ENCODE measurements at regions of chr2 and their contacts with region 1.

Region 1: DNA sequence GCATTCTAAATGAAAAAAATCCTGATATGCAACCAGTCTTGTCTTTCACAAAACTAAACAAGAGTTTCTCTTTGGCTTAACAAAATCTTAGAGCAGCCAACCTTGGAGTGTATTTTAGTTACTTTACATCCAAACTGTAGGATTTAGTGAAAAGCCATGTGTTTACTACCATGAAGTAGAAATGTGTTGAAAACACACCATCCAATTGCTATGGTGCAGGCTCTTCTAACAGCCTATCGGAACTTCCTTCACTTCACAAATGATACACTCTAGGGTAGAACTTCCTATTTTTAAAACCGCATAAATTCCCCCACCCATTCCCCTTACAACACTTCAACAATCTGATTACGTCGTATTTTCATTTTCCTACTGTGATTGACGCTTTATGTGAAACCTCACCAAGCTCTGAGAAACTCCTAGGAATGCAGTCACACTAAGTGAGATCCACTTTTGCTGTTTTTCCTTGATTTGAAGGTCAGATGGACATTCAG is 74.4 kb upstream of the MAP4K4 start:
- DNase-seq: no peak
- ATAC-seq: peak; percentile 82
- H3K4me3 Mint-ChIP-seq: peak overlapping the region; percentile 69
- H3K27ac Mint-ChIP-seq: peak overlapping the region; percentile 95
- H3K4me1 Mint-ChIP-seq: peaks cover 78% of the 10 kb centered on the region
- H3K27me3 Mint-ChIP-seq: no peaks in the 10 kb centered on the region
- CTCF ChIP-seq: no peak

Region 2: DNA sequence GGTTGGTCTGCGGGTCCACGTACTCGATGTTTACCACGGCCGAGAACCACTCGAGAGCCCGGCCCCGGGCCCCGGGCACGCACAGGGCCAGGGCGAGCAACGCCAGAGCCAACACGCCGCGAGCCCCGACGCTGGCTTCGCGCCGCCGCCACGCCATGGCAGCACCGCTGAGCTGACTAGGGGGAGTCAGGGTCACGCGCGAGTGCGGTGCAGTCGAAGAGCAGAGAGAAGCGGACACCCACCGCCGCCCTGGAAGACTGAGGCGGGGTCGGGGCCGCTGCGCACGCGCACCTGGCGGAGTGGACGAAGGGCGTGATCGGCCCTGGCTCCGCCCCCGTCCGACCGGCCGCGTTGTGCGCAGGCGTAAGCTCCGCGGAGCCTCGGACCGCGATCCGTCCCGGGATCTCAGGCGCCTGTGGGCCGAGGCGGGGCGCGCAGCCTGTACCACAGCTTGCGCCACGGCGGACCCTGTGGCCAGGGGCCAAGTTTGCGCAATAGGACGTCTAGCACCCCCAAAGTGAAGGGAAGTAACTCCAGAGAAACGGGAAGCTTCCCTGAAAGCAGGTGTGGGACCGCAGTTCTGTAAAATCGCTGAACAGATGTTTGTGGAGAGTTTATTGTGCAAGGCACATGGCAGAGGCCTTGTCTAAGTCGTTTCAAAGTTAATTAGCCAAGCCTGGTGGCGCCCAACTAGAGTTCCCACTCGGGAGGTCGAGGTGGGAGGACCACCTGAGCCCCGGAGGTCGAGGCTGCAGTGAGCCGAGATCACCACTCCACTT is 314.5 kb before region 1 on chr2 and contains the start of gene RNF149:
- CTCF ChIA-PET with region 1: no interaction called
- POLR2A ChIA-PET with region 1: interaction called, 3 read pairs
- intact Hi-C with region 1: loop called (anchors 1 kb)
- DNase-seq: peak; percentile 97
- ATAC-seq: peak; percentile 79
- H3K4me3 Mint-ChIP-seq: peak within 1 kb of the TSS; percentile 85
- H3K27ac Mint-ChIP-seq: peak within 1 kb of the TSS; percentile 90
- H3K4me1 Mint-ChIP-seq: peaks cover 54% of the 10 kb centered on the region
- H3K27me3 Mint-ChIP-seq: no peaks in the 10 kb centered on the region
- CTCF ChIP-seq: no peak
- total RNA-seq, gene RNF149: 39.6 and 48.3 TPM in 2 replicates

Region 3: GRCh38 chr2:101387151-101387807 is 235.8 kb before region 1 on chr2 and contains the start of gene CREG2:
- CTCF ChIA-PET with region 1: no interaction called
- POLR2A ChIA-PET with region 1: no interaction called
- intact Hi-C with region 1: no loop called
- DNase-seq: peak; percentile 44
- ATAC-seq: peak; percentile 83
- H3K4me3 Mint-ChIP-seq: peak within 1 kb of the TSS; percentile 66
- H3K27ac Mint-ChIP-seq: no peak within 1 kb of the TSS
- H3K4me1 Mint-ChIP-seq: peaks cover 15% of the 10 kb centered on the region
- H3K27me3 Mint-ChIP-seq: peaks cover 45% of the 10 kb centered on the region
- CTCF ChIP-seq: no peak
- total RNA-seq, gene CREG2: not detected in 2 replicates

Region 4: DNA sequence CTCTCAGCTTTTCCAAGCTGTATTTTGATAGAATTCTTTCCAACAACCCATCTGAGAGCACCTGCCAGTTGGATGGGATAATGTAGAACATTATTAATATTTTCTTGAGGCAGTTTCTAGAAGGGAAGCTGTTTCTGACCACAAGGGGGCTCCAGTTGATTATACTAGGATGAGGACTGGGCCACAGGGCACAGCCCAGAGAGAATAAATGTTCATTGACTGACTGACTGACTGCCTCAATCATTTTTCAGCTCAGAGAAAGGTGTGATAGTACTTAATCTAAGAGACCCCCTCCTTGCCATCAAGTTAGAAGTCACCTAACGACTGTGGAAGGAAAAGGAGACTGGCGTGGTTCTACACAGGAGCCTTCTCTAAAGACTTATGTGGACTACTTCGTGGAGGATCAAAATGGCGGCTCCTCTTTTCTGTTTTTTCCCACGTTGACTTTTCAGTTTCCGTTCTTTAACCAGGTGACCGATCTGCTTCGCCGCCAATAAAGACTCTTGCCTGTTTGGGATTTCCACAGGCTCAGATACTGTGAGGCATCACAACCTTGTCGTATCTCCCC is 203.9 kb before region 1 on chr2:
- CTCF ChIA-PET with region 1: interaction called, 4 read pairs
- POLR2A ChIA-PET with region 1: interaction called, 5 read pairs
- intact Hi-C with region 1: loop called (anchors 1 kb)
- DNase-seq: no peak
- ATAC-seq: peak; percentile 88
- H3K4me3 Mint-ChIP-seq: no peak overlapping the region
- H3K27ac Mint-ChIP-seq: no peak overlapping the region
- H3K4me1 Mint-ChIP-seq: peaks cover 6% of the 10 kb centered on the region
- H3K27me3 Mint-ChIP-seq: no peaks in the 10 kb centered on the region
- CTCF ChIP-seq: no peak

Region 5: GRCh38 chr2:101644842-101645383 is 21.8 kb after region 1 on chr2:
- CTCF ChIA-PET with region 1: no interaction called
- POLR2A ChIA-PET with region 1: interaction called, 11 read pairs
- intact Hi-C with region 1: no loop called
- DNase-seq: no peak
- ATAC-seq: no peak
- H3K4me3 Mint-ChIP-seq: no peak overlapping the region
- H3K27ac Mint-ChIP-seq: no peak overlapping the region
- H3K4me1 Mint-ChIP-seq: no peaks in the 10 kb centered on the region
- H3K27me3 Mint-ChIP-seq: no peaks in the 10 kb centered on the region
- CTCF ChIP-seq: no peak

Region 6: GRCh38 chr2:101677658-101678057 is 54.6 kb after region 1 on chr2:
- CTCF ChIA-PET with region 1: no interaction called
- POLR2A ChIA-PET with region 1: interaction called, 13 read pairs
- intact Hi-C with region 1: loop called (anchors 1 kb)
- DNase-seq: no peak
- ATAC-seq: peak; percentile 70
- H3K4me3 Mint-ChIP-seq: no peak overlapping the region
- H3K27ac Mint-ChIP-seq: peak overlapping the region; percentile 24
- H3K4me1 Mint-ChIP-seq: peaks cover 32% of the 10 kb centered on the region
- H3K27me3 Mint-ChIP-seq: no peaks in the 10 kb centered on the region
- CTCF ChIP-seq: no peak

Region 7: DNA sequence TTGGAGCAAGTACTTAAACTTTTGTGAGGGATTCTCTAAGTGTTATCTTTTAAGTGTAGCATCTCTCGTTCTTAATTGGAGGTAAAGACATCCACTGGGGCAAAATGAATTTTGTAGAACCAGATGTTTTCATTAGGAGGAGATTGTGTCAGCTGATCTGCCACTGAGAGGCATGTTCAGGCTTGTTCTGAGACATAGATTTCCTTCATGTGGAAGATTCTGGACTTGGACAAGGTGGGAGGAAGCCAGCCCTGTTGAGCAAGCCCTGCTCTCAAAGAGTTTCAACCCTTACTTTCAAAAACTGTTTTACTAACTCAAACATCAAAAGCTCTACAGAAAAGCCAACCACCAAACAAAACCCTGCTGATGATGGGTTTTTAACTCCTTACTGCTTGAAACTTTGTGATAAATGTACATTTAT is 81.0 kb after region 1 on chr2:
- CTCF ChIA-PET with region 1: interaction called, 4 read pairs
- POLR2A ChIA-PET with region 1: interaction called, 106 read pairs
- intact Hi-C with region 1: no loop called
- DNase-seq: no peak
- ATAC-seq: peak; percentile 11
- H3K4me3 Mint-ChIP-seq: peak overlapping the region; percentile 75
- H3K27ac Mint-ChIP-seq: peak overlapping the region; percentile 88
- H3K4me1 Mint-ChIP-seq: no peaks in the 10 kb centered on the region
- H3K27me3 Mint-ChIP-seq: no peaks in the 10 kb centered on the region
- CTCF ChIP-seq: no peak

Region 8: DNA sequence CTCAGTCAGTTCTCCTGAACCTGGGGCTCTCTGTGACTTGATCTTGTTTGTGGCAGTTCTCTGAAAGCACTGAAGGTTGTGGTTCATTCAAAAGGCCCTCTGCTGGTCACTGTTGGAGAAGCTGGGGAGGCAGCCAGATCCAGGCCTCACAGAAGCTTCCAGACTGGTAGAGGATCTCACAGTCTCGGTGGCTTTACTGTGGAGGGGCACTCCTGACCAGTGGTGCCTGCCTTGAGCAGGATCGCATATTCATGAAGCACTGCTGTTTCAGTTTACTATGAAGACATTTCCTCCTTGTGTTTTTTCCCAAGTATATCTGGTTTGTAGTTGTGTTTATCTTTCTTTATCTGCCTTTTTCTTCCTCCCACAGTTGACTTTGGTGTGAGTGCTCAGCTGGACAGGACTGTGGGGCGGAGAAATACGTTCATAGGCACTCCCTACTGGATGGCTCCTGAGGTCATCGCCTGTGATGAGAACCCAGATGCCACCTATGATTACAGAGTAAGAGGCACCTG is 208.3 kb after region 1 on chr2:
- CTCF ChIA-PET with region 1: interaction called, 9 read pairs
- POLR2A ChIA-PET with region 1: interaction called, 9 read pairs
- intact Hi-C with region 1: loop called (anchors 2 kb)
- DNase-seq: peak; percentile 37
- ATAC-seq: peak; percentile 82
- H3K4me3 Mint-ChIP-seq: no peak overlapping the region
- H3K27ac Mint-ChIP-seq: peak overlapping the region; percentile 56
- H3K4me1 Mint-ChIP-seq: peaks cover 49% of the 10 kb centered on the region
- H3K27me3 Mint-ChIP-seq: no peaks in the 10 kb centered on the region
- CTCF ChIP-seq: no peak

Region 9: GRCh38 chr2:102129951-102130646 is 507.0 kb after region 1 on chr2:
- CTCF ChIA-PET with region 1: no interaction called
- POLR2A ChIA-PET with region 1: no interaction called
- intact Hi-C with region 1: no loop called
- DNase-seq: no peak
- ATAC-seq: no peak
- H3K4me3 Mint-ChIP-seq: no peak overlapping the region
- H3K27ac Mint-ChIP-seq: no peak overlapping the region
- H3K4me1 Mint-ChIP-seq: no peaks in the 10 kb centered on the region
- H3K27me3 Mint-ChIP-seq: peaks cover 13% of the 10 kb centered on the region
- CTCF ChIP-seq: no peak

Region 10: DNA sequence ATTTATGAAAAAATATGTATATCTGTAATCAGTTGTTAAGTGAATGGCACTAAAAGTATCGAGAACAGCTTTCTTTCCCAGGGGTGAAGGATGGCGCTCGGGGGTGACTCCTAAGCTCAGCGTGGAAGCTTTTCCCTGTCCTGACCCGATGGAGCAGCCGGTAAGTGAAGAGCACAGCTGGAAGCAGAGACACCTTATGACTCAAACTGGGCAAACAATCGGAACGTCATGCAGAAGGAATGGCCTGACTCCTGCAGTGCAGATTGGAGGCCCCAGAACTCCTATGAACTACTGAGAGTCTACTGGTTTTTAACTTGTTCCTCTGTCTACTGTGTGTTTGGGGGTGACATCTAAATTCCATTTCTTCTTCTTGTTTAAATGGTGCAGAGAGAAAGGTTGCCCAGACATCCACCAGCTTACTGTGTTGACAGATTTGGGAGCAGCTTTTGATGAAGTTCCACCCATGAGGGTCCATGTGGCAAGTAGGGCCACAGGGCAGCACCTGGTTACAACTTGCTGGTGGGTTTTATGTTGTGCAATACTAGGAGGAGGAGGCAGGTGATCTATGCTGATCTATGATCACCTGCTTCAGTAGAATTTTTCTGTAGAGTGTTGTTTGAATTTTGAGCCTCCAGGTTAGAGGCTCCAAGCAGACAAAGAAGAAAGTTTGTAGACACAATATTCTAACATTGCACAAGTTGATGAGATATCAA is 1085.9 kb after region 1 on chr2:
- CTCF ChIA-PET with region 1: no interaction called
- POLR2A ChIA-PET with region 1: no interaction called
- intact Hi-C with region 1: no loop called
- DNase-seq: no peak
- ATAC-seq: no peak
- H3K4me3 Mint-ChIP-seq: no peak overlapping the region
- H3K27ac Mint-ChIP-seq: no peak overlapping the region
- H3K4me1 Mint-ChIP-seq: no peaks in the 10 kb centered on the region
- H3K27me3 Mint-ChIP-seq: peaks cover 4% of the 10 kb centered on the region
- CTCF ChIP-seq: no peak

Measured in activated B cell treated with CpG ODN at 0.5 μM for 24 hours (primary cell).